Caco-2 (cell line): ENCODE measurements at regions of chr1 and their contacts with region 1.

Region 1: DNA sequence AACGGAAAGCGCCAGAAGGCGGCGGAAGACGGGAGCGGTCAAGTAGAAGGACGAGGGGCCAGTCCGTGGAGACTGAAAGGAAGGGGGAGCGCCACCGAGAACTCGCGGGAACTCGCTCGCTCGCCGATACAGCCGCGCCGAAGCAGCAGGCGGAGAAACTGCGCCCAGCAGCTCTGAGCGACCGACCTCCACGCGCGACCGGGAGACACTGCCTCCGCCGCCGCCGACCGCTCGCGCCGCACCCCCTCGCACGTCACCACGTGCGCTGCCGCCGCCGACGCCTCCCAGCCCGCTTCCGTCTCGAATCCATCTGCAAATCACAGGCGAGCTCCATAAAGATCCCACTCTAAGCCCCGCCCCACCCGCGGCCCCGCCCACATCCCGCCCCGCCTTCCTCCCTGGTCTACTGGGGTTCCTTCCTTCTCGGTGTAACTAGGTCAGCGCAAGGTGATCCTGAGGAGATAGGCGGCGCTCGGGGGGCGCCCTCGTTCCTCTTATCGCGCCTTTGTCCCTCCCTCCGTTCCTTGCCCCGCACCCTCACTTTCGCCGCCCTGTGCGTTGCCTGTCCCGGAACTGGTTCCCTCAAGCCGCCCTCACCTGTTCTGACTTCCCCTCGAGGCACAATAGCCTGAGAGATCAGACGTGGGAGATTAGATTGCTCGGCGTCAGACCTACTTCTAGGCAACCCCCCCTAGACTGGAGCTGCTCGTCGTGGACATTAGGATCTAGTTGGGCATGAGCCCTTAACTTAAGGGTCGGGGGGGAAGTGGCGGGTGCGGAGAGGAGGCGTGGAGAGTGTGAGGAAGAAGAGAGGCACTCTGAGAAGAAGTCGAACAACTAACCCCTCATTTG is at the start of gene IVNS1ABP:
- DNase-seq: peak; percentile 95 to 98
- H3K4me3 ChIP-seq: peak within 1 kb of the TSS; percentile 97
- H3K4me3 Mint-ChIP-seq: peak within 1 kb of the TSS; percentile 93
- H3K27ac Mint-ChIP-seq: peak within 1 kb of the TSS; percentile 98
- H3K4me1 ChIP-seq: peaks cover 21% of the 10 kb centered on the region; the same call in 1 of the 2 replicates
- H3K4me1 Mint-ChIP-seq: peaks cover 12% of the 10 kb centered on the region
- H3K27me3 ChIP-seq: no peaks in the 10 kb centered on the region
- H3K27me3 Mint-ChIP-seq: no peaks in the 10 kb centered on the region
- CTCF ChIP-seq: peak in 1 of 2 experiments; percentile 66
- total RNA-seq, gene IVNS1ABP: 72.4 and 74.5 TPM in 2 replicates

Region 2: DNA sequence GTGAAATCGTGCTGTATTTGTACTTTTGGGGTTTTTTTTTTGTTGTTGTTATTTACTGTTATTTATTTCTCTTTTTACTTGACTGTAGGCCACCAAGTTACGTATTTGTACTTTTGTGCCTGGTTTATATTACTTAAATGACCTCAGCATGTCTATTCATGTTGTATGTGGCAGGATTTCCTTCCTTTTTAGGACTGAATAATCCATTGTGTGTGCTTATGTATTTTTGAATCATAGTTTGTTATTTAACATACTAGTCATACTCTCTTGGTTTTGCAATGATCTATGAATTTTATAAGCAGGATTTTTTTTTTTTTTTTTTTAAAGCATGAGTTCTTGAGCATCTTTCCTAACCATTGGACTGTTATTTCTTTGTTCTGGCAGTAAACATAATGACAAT is 220.7 kb before region 1 on chr1:
- CTCF ChIA-PET with region 1: no interaction called
- POLR2A ChIA-PET with region 1: no interaction called
- intact Hi-C with region 1: no loop called
- DNase-seq: no peak
- H3K4me3 ChIP-seq: no peak overlapping the region
- H3K4me3 Mint-ChIP-seq: no peak overlapping the region
- H3K27ac Mint-ChIP-seq: no peak overlapping the region
- H3K4me1 ChIP-seq: no peaks in the 10 kb centered on the region
- H3K4me1 Mint-ChIP-seq: no peaks in the 10 kb centered on the region
- H3K27me3 ChIP-seq: no peaks in the 10 kb centered on the region
- H3K27me3 Mint-ChIP-seq: no peaks in the 10 kb centered on the region
- CTCF ChIP-seq: no peak

Region 3: GRCh38 chr1:185208626-185209180 is 108.6 kb before region 1 on chr1:
- CTCF ChIA-PET with region 1: no interaction called
- POLR2A ChIA-PET with region 1: no interaction called
- intact Hi-C with region 1: loop called (anchors 10 kb)
- DNase-seq: no peak
- H3K4me3 ChIP-seq: no peak overlapping the region
- H3K4me3 Mint-ChIP-seq: no peak overlapping the region
- H3K27ac Mint-ChIP-seq: no peak overlapping the region
- H3K4me1 ChIP-seq: no peaks in the 10 kb centered on the region
- H3K4me1 Mint-ChIP-seq: no peaks in the 10 kb centered on the region
- H3K27me3 ChIP-seq: no peaks in the 10 kb centered on the region
- H3K27me3 Mint-ChIP-seq: no peaks in the 10 kb centered on the region
- CTCF ChIP-seq: no peak

Region 4: DNA sequence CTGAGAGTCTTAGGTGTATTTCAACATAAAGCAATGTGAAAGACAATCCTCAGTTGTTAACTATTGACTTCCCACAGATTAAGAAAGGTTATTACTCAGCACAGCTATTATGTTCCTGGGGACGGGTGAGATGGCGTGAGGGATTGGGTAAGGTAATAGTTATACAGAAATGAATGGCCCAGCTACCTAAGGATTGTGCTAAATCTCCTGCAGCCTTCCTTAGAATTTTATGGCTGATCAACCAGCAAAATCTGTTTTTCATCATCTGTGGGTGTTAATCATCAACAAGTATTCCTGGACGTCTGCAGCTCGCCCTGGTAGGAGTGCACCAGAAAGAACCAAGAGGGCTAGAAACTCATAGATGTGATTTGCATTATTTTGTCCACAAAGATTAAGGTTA is 145.8 kb after region 1 on chr1:
- CTCF ChIA-PET with region 1: interaction called, 8 read pairs
- POLR2A ChIA-PET with region 1: interaction called, 5 read pairs
- intact Hi-C with region 1: loop called (anchors 2 kb)
- DNase-seq: peak in 1 of 2 experiments; percentile 21
- H3K4me3 ChIP-seq: no peak overlapping the region
- H3K4me3 Mint-ChIP-seq: no peak overlapping the region
- H3K27ac Mint-ChIP-seq: peak overlapping the region; percentile 56
- H3K4me1 ChIP-seq: peaks cover 3% of the 10 kb centered on the region; the same call in 1 of the 2 replicates
- H3K4me1 Mint-ChIP-seq: peaks cover 20% of the 10 kb centered on the region
- H3K27me3 ChIP-seq: no peaks in the 10 kb centered on the region
- H3K27me3 Mint-ChIP-seq: no peaks in the 10 kb centered on the region
- CTCF ChIP-seq: no peak

Region 5: DNA sequence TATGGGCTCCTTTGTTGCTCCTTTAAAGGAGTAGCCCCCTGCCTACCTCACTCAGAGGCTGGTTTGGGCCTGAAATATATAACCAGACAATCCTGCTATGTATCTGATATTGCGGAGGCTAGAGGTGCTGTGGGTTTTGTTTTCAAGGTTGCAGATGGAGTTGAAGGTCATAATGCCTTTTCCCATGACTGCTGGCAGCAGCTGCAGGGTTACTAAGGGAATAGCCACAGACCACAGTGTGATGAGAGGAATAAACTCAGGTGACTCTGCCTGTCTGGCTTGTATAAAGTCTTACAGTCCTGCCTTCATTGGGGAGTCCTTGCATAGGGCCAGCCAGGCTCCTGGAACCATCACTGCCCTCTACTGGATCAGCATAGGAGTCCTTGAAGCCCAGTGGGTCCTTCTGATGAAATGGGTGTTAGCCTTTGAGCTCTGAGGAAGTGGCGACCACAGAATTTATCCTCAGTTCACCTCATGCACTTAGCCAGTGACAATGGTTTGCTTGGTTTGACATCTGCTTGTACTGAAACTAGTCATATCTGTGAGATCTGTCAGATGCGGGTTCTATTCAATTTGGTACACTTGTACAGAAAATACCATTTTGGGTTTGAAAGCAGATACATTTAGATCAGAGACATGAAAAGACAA is 242.5 kb after region 1 on chr1:
- CTCF ChIA-PET with region 1: interaction called, 8 read pairs
- POLR2A ChIA-PET with region 1: no interaction called
- intact Hi-C with region 1: loop called (anchors 1 kb)
- DNase-seq: peak; percentile 39 to 45
- H3K4me3 ChIP-seq: no peak overlapping the region
- H3K4me3 Mint-ChIP-seq: no peak overlapping the region
- H3K27ac Mint-ChIP-seq: no peak overlapping the region
- H3K4me1 ChIP-seq: peaks cover 4% of the 10 kb centered on the region; the same call in 1 of the 2 replicates
- H3K4me1 Mint-ChIP-seq: peaks cover 11% of the 10 kb centered on the region
- H3K27me3 ChIP-seq: no peaks in the 10 kb centered on the region
- H3K27me3 Mint-ChIP-seq: no peaks in the 10 kb centered on the region
- CTCF ChIP-seq: peak in 1 of 2 experiments; percentile 41

Region 6: DNA sequence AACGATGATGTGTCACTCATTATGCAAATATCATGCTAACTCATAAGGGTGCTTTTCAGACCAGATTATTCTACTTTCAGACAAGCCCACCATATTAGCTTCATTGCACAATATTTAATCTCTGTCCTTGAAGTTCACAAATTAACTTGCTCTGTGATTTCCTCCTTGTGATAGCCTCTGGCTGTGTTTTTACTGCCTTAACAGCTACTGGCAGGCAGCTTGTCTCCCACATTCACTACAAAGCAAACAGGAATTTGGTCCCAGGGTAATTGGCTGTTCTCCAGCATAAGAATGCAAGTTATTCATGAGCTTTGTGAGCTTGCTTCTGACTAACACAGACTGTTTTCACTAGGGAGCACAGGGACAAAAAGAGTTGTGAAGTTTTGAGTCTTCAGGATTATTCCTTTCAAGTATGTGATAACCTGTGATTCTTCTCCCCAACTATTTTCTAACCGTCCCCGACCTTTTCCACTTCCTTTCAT is 329.0 kb after region 1 on chr1:
- CTCF ChIA-PET with region 1: interaction called, 14 read pairs
- POLR2A ChIA-PET with region 1: interaction called, 13 read pairs
- intact Hi-C with region 1: loop called (anchors 2 kb)
- DNase-seq: peak; percentile 82 to 90
- H3K4me3 ChIP-seq: no peak overlapping the region
- H3K4me3 Mint-ChIP-seq: peak overlapping the region; percentile 48
- H3K27ac Mint-ChIP-seq: peak overlapping the region; percentile 86
- H3K4me1 ChIP-seq: peaks cover 37% of the 10 kb centered on the region
- H3K4me1 Mint-ChIP-seq: peaks cover 25% of the 10 kb centered on the region
- H3K27me3 ChIP-seq: no peaks in the 10 kb centered on the region
- H3K27me3 Mint-ChIP-seq: no peaks in the 10 kb centered on the region
- CTCF ChIP-seq: no peak

Region 7: DNA sequence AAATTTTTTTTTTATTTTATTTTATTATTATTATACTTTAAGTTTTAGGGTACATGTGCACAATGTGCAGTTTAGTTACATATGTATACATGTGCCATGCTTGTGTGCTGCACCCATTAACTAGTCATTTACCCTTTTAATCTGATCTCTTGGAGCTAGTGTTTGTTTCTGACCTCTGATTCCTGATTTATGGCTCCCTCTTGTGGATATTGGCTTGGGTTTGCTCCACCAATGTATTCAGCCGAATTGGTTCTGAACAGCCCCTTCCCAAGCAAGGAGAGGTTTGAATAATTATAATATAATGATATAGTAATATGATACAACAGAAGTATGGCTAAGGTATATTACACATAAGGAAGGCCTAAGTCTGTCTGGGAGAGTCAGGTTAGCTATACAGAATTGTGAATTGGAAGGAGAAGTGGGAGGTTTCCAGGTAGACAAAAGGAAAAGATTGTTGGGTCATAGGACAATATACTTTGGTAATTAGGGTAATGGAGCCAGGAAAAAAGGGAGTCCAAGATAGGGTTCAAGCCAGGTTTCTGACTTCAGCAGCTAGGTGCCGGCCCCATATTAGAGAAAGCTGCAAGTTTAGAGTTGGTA is 363.9 kb after region 1 on chr1:
- CTCF ChIA-PET with region 1: interaction called, 17 read pairs
- POLR2A ChIA-PET with region 1: no interaction called
- intact Hi-C with region 1: loop called (anchors 1 kb)
- DNase-seq: peak in 1 of 2 experiments; percentile 59
- H3K4me3 ChIP-seq: no peak overlapping the region
- H3K4me3 Mint-ChIP-seq: no peak overlapping the region
- H3K27ac Mint-ChIP-seq: no peak overlapping the region
- H3K4me1 ChIP-seq: no peaks in the 10 kb centered on the region
- H3K4me1 Mint-ChIP-seq: no peaks in the 10 kb centered on the region
- H3K27me3 ChIP-seq: no peaks in the 10 kb centered on the region
- H3K27me3 Mint-ChIP-seq: no peaks in the 10 kb centered on the region
- CTCF ChIP-seq: peak; percentile 42 to 53